Calu3 (cell line): ENCODE measurements at regions of chr11 and their contacts with region 1.

Region 1: DNA sequence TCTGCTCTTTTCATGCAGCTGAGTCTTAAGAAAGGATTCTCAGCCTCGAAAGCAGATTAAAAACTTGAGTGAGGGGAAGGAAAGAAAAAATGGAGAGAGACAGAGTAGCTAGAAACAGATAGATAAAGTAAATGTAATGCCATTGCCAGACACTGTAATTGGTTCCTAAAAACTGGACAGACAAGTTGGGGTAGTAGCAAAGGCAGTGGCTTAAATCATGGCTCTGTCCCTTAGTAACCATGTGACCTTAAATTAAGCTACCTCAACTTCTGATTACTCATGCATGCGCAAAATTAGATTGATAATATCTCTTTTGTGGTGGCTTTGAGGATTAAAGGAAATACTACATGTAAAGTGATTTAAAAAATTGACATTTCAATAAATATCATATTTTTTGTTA is 911.5 kb downstream of the FAM181B start:
- DNase-seq: no peak
- H3K4me3 Mint-ChIP-seq: no peak overlapping the region
- H3K27ac Mint-ChIP-seq: no peak overlapping the region
- H3K4me1 Mint-ChIP-seq: no peaks in the 10 kb centered on the region
- H3K27me3 Mint-ChIP-seq: no peaks in the 10 kb centered on the region
- CTCF ChIP-seq: no peak

Region 2: DNA sequence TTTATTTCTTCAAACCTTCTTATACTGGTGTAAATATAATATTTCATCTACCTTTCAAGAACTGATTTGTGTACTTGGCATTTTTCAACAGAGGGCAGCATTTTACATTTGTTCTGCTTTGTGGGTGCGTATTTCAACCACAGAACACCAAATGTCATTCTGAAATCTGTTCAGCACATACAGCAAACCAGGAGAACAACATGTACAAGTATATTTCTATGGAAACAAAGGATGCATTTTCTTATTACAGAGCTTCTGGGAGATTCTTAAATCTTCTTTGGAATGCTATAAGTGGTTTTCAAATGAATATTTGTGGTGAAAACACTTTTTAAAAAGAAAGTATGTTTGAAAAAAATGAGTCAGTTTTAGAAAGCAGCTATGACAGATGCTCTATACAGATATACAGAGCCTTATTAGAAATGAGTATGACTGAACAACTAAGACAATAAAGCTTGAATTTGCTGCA is 34.6 kb before region 1 on chr11:
- CTCF ChIA-PET with region 1: no interaction called
- intact Hi-C with region 1: loop called (anchors 5 kb)
- DNase-seq: no peak
- H3K4me3 Mint-ChIP-seq: no peak overlapping the region
- H3K27ac Mint-ChIP-seq: no peak overlapping the region
- H3K4me1 Mint-ChIP-seq: no peaks in the 10 kb centered on the region
- H3K27me3 Mint-ChIP-seq: no peaks in the 10 kb centered on the region
- CTCF ChIP-seq: no peak